PC-9 (cell line): ENCODE measurements at regions of chr5 and their contacts with region 1.

Region 1: GRCh38 chr5:134904630-134905245 is at the start of gene PCBD2:
- DNase-seq: peak; percentile 81 to 95
- H3K4me3 ChIP-seq: peak within 1 kb of the TSS; percentile 99
- H3K27ac ChIP-seq: peak within 1 kb of the TSS; percentile 86
- H3K4me1 ChIP-seq: peaks cover 7% of the 10 kb centered on the region; the same call in 1 of the 2 replicates
- H3K27me3 ChIP-seq: no peaks in the 10 kb centered on the region
- CTCF ChIP-seq: peak; percentile 74
- total RNA-seq, gene PCBD2: 14.5 and 17.6 TPM in 2 replicates

Region 2: GRCh38 chr5:133531594-133531993 is 1373.1 kb before region 1 on chr5:
- CTCF ChIA-PET with region 1: no interaction called
- POLR2A ChIA-PET with region 1: no interaction called
- intact Hi-C with region 1: no loop called
- DNase-seq: no peak
- H3K4me3 ChIP-seq: no peak overlapping the region
- H3K27ac ChIP-seq: no peak overlapping the region
- H3K4me1 ChIP-seq: no peaks in the 10 kb centered on the region
- H3K27me3 ChIP-seq: no peaks in the 10 kb centered on the region
- CTCF ChIP-seq: no peak

Region 3: DNA sequence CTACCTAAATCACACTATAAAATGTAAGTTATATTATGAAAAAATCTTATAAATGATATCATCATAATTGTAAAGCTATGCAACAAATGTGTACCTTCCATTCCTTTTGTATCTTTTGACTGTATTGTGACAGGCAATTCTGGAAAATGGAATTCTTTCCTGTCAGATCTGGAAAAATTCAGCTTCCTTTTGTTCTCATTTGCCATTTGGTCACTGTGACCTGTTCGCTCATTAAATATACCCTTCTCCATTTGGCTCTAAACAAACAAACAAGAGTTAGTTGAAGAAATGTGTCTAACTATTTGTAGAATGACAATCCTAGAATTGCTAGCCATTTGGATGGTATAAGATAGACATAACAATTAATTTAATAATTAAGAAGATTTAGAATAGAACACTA is 600.4 kb before region 1 on chr5:
- CTCF ChIA-PET with region 1: no interaction called
- POLR2A ChIA-PET with region 1: no interaction called
- intact Hi-C with region 1: loop called (anchors 10 kb)
- DNase-seq: no peak
- H3K4me3 ChIP-seq: no peak overlapping the region
- H3K27ac ChIP-seq: no peak overlapping the region
- H3K4me1 ChIP-seq: no peaks in the 10 kb centered on the region
- H3K27me3 ChIP-seq: no peaks in the 10 kb centered on the region
- CTCF ChIP-seq: no peak

Region 4: DNA sequence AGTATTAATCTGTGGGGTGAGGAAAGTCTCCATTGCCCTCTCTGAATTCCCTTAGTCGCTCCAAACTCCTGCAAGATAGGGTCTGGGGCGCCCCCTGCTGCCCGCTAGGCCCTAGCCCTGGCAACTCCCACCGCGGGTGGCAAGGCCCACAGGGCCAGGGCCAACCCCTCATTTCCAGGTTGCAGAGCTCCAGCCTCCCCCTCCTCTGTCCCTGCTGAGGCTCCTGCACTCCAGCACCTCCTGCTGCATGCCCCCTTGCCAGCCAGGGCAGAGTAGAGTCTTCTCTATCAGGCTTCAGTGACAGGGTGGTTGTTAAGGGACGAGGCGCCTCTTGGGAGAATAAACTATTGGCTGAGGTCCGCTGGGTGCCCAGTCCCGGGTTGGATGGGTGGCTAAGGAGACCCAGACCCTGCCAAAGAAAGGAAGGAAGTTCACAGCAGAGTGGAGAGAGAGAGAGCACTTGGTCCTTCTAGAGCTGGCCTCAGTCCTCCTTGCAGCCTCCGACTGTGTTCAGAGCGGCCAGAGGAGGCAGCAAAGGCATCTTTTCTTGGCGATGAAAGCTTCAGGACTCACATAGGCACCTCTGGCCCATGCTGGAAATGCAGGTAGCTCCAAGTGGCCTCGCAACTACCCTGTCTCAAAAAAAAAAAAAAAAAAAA is 317.7 kb before region 1 on chr5:
- CTCF ChIA-PET with region 1: interaction called, 5 read pairs
- POLR2A ChIA-PET with region 1: interaction called, 10 read pairs
- intact Hi-C with region 1: loop called (anchors 10 kb)
- DNase-seq: peak; percentile 77 to 80
- H3K4me3 ChIP-seq: no peak overlapping the region
- H3K27ac ChIP-seq: no peak overlapping the region
- H3K4me1 ChIP-seq: peaks cover 19% of the 10 kb centered on the region
- H3K27me3 ChIP-seq: no peaks in the 10 kb centered on the region
- CTCF ChIP-seq: peak; percentile 86

Region 5: DNA sequence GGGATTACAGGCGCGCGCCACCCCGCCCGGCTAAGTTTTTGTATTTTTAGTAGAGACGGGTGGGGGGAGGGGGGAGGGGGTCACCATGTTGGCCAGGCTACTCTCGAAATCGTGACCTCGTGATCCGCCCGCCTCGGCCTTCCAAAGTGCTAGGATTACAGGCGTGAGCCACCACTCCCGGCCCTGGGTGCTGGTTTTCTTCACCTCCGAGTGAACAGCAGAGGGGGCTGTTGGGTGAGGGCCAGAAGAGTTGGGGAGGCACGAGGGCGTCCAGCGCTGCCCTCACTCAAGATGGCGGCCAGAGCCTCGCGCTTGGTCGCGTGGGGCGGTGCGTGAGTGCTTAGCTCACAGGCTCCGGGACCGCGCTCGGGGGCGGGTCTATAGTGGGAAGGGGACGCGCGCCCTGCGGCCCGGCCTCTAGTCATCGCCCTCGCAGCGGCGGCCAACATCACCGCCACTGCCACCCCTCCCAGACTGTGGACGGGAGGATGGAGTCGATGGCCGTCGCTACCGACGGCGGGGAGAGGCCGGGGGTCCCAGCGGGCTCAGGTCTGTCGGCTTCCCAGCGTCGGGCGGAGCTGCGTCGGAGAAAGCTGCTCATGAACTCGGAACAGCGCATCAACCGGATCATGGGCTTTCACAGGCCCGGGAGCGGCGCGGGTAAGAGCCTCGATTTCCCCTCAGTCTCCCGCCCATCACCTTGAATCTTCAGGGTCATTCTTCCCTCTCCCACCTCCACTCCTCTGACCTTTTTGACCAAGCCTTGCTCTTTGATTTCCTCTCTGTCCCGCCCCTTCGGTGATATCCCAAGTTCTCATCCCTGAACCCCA is 166.4 kb before region 1 on chr5 and contains the start of gene CAMLG:
- CTCF ChIA-PET with region 1: no interaction called
- POLR2A ChIA-PET with region 1: no interaction called
- intact Hi-C with region 1: loop called (anchors 1 kb)
- DNase-seq: peak; percentile 91 to 97
- H3K4me3 ChIP-seq: peak within 1 kb of the TSS; percentile 72
- H3K27ac ChIP-seq: peak within 1 kb of the TSS; percentile 83
- H3K4me1 ChIP-seq: peaks cover 14% of the 10 kb centered on the region
- H3K27me3 ChIP-seq: no peaks in the 10 kb centered on the region
- CTCF ChIP-seq: peak; percentile 70
- total RNA-seq, gene CAMLG: 24.4 and 28.0 TPM in 2 replicates

Region 6: GRCh38 chr5:134873987-134874830 is 30.5 kb before region 1 on chr5 and contains the start of gene TXNDC15:
- CTCF ChIA-PET with region 1: no interaction called
- POLR2A ChIA-PET with region 1: no interaction called
- intact Hi-C with region 1: loop called (anchors 2 kb)
- DNase-seq: peak; percentile 62 to 80
- H3K4me3 ChIP-seq: peak within 1 kb of the TSS; percentile 85
- H3K27ac ChIP-seq: peak within 1 kb of the TSS; percentile 42
- H3K4me1 ChIP-seq: 0 out of 2 replicates have a peak, but pooled peaks cover 8% of the 10 kb centered on the region
- H3K27me3 ChIP-seq: no peaks in the 10 kb centered on the region
- CTCF ChIP-seq: no peak
- total RNA-seq, gene TXNDC15: 18.0 and 19.5 TPM in 2 replicates

Region 7: GRCh38 chr5:135013947-135014570 is 109.3 kb after region 1 on chr5:
- CTCF ChIA-PET with region 1: no interaction called
- POLR2A ChIA-PET with region 1: no interaction called
- intact Hi-C with region 1: no loop called
- DNase-seq: no peak
- H3K4me3 ChIP-seq: no peak overlapping the region
- H3K27ac ChIP-seq: no peak overlapping the region
- H3K4me1 ChIP-seq: no peaks in the 10 kb centered on the region
- H3K27me3 ChIP-seq: no peaks in the 10 kb centered on the region
- CTCF ChIP-seq: no peak

Region 8: DNA sequence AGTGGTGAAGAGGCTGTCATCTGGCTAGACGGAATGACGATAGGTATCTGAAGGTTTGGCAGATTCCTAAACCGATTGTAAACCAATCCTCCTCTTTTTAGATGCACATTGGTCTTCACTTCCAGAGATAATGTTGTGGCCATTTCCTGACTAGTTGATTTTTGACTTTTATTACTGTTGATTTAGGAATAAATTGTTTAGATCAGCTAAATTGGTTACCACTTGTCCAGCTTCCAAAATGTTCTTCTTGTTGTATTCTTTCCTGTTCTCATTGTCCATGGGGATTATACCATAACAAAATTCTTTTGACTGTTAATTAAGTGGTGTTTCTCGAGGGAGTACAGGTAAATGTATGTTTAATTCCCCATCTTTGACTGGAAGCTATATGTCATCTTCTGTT is 374.6 kb after region 1 on chr5:
- CTCF ChIA-PET with region 1: interaction called, 12 read pairs
- POLR2A ChIA-PET with region 1: no interaction called
- intact Hi-C with region 1: no loop called
- DNase-seq: no peak
- H3K4me3 ChIP-seq: no peak overlapping the region
- H3K27ac ChIP-seq: no peak overlapping the region
- H3K4me1 ChIP-seq: no peaks in the 10 kb centered on the region
- H3K27me3 ChIP-seq: no peaks in the 10 kb centered on the region
- CTCF ChIP-seq: no peak